AG04450 (cell line): ENCODE measurements at regions of chr19 and their contacts with region 1.

Region 1: GRCh38 chr19:18007044-18007916 is 690 bp upstream of the ARRDC2 start:
- DNase-seq: no peak
- H3K4me3 ChIP-seq: peak overlapping the region; percentile 58
- H3K27ac ChIP-seq: peak overlapping the region; percentile 21
- H3K27me3 ChIP-seq: no peaks in the 10 kb centered on the region
- CTCF ChIP-seq: peak; percentile 97

Region 2: DNA sequence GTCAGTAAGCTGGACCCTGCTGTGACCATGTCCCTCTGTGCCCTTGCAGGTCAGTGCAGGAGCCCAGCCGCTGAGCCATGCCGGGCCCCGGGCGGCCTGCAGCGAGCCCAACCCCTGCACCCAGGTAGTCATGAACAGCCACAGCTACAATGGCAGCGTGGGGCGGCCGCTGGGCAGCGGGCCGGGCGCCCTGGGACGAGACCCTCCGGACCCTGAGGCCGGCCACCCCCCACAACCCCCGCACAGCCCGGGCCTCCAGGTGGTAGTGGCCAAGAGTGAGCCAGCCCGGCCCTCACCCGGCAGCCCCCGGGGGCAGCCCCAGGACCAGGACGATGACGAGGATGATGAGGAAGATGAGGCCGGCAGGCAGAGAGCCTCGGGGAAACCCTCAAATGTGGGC is 33.5 kb before region 1 on chr19:
- CTCF ChIA-PET with region 1: no interaction called
- POLR2A ChIA-PET with region 1: no interaction called
- DNase-seq: no peak
- H3K4me3 ChIP-seq: no peak overlapping the region
- H3K27ac ChIP-seq: no peak overlapping the region
- H3K27me3 ChIP-seq: peaks cover 7% of the 10 kb centered on the region
- CTCF ChIP-seq: no peak

Region 3: GRCh38 chr19:18058208-18059030 is 51.1 kb after region 1 on chr19:
- CTCF ChIA-PET with region 1: interaction called, 98 read pairs
- POLR2A ChIA-PET with region 1: interaction called, 3 read pairs
- DNase-seq: no peak
- H3K4me3 ChIP-seq: peak overlapping the region; percentile 35
- H3K27ac ChIP-seq: peak overlapping the region; percentile 57
- H3K27me3 ChIP-seq: peaks cover 5% of the 10 kb centered on the region
- CTCF ChIP-seq: peak; percentile 91

Region 4: DNA sequence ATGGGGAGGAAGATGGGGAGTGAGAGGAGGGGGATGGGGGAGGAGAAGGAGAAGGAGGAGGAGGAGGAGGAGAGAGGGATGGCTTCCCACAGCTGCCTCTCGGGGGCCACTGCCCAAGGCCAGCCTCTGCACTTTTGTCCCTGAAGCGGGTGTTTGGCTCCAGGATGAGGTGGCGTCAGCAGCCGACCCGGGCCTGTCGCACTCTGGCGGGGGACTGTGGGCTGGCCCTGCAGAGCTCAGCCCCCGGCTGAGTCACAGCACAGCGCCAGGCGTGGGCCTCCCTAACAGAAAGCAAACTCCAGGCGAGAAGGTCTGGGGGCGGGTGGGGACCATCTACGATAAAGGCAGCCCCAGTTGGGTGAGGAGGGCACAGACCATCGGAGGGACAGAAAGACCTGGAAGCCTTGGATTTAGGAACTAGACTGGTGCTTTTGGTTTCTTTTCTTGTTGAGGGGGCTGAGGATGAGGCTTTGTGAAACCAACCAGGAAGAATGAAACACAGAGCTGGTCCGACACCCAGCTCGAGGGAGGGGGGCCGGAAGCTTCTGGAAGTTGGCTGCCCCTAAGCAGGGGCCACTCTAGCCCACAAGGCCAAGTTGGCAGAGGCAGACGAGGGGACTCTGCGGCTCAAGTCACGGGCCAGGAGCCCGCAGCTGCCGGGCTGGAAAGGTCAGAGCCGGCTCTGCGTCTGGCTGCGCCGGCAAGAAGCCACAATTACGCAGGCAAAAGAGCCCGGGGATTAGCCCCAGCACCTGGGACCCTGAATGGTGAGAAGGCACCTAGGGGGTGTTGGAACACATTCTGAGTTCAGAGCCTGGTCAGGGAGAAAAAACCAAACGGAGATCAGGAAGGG is 297.4 kb after region 1 on chr19:
- CTCF ChIA-PET with region 1: no interaction called
- POLR2A ChIA-PET with region 1: no interaction called
- DNase-seq: no peak
- H3K4me3 ChIP-seq: peak overlapping the region; percentile 52
- H3K27ac ChIP-seq: peak overlapping the region; percentile 98
- H3K27me3 ChIP-seq: no peaks in the 10 kb centered on the region
- CTCF ChIP-seq: no peak